ENCODE measurements at regions of chr14 and their contacts with region 1.

Region 1: DNA sequence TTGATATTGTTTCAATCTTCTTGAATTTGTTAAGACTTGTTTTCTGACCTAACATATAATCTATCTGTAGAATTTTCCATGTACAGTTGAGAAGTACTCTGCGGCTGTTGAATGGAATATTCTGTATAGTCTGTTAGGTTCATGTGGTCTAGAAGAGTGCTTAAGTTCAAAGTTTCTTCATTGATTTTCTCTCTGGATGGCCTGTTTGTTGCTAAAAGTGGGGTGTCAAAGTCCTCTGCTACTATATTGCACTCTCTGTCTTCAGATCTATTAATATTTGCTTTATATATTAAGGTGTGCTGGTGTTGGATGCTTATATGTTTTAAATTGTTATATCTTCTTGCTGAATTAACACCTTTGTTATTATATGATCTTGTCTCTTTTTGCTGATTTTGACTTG is 290.9 kb upstream of the STXBP6 start:
- DNase-seq: no peak
- H3K4me3 ChIP-seq: no peak overlapping the region
- H3K27ac ChIP-seq: no peak overlapping the region
- H3K4me1 ChIP-seq: no peaks in the 10 kb centered on the region
- H3K27me3 ChIP-seq: no peaks in the 10 kb centered on the region
- CTCF ChIP-seq: no peak
- EP300 ChIP-seq: no peak
- POLR2A ChIP-seq: no peak

Region 2: GRCh38 chr14:25259470-25259869 is 81.4 kb before region 1 on chr14:
- in situ Hi-C with region 1: no loop called
- intact Hi-C with region 1: no loop called
- DNase-seq: no peak
- H3K4me3 ChIP-seq: no peak overlapping the region
- H3K27ac ChIP-seq: no peak overlapping the region
- H3K4me1 ChIP-seq: no peaks in the 10 kb centered on the region
- H3K27me3 ChIP-seq: no peaks in the 10 kb centered on the region
- CTCF ChIP-seq: no peak
- EP300 ChIP-seq: no peak
- POLR2A ChIP-seq: no peak

Region 3: GRCh38 chr14:25375639-25376038 is 34.8 kb after region 1 on chr14:
- in situ Hi-C with region 1: no loop called
- intact Hi-C with region 1: loop called (anchors 2 kb)
- DNase-seq: no peak
- H3K4me3 ChIP-seq: no peak overlapping the region
- H3K27ac ChIP-seq: no peak overlapping the region
- H3K4me1 ChIP-seq: no peaks in the 10 kb centered on the region
- H3K27me3 ChIP-seq: no peaks in the 10 kb centered on the region
- CTCF ChIP-seq: no peak
- EP300 ChIP-seq: no peak
- POLR2A ChIP-seq: no peak

Region 4: GRCh38 chr14:25909045-25909747 is 568.3 kb after region 1 on chr14:
- in situ Hi-C with region 1: no loop called
- intact Hi-C with region 1: no loop called
- DNase-seq: no peak
- H3K4me3 ChIP-seq: no peak overlapping the region
- H3K27ac ChIP-seq: no peak overlapping the region
- H3K4me1 ChIP-seq: peaks cover 0 to 4% (median 0%) of the 10 kb centered on the region in 4 donors
- H3K27me3 ChIP-seq: no peaks in the 10 kb centered on the region
- CTCF ChIP-seq: no peak
- EP300 ChIP-seq: no peak
- POLR2A ChIP-seq: no peak